B cell (primary cell): ENCODE measurements at regions of chr11 and their contacts with region 1.

Region 1: GRCh38 chr11:1852877-1853276 is at the start of gene LSP1:
- DNase-seq: peak; percentile 95
- ATAC-seq: peak; percentile 60
- H3K4me3 ChIP-seq: peak within 1 kb of the TSS; percentile 57 to 97 (median 95)
- H3K4me3 Mint-ChIP-seq: peak within 1 kb of the TSS; percentile 100
- H3K27ac ChIP-seq: peak within 1 kb of the TSS; percentile 94 to 99
- H3K27ac Mint-ChIP-seq: peak within 1 kb of the TSS; percentile 91
- H3K4me1 ChIP-seq: peaks cover 74 to 90% of the 10 kb centered on the region in 2 donors
- H3K4me1 Mint-ChIP-seq: peaks cover 72% of the 10 kb centered on the region
- H3K27me3 ChIP-seq: no peaks in the 10 kb centered on the region
- H3K27me3 Mint-ChIP-seq: no peaks in the 10 kb centered on the region
- CTCF ChIP-seq: no peak
- total RNA-seq, gene LSP1: 445 and 446 TPM in 2 replicates

Region 2: DNA sequence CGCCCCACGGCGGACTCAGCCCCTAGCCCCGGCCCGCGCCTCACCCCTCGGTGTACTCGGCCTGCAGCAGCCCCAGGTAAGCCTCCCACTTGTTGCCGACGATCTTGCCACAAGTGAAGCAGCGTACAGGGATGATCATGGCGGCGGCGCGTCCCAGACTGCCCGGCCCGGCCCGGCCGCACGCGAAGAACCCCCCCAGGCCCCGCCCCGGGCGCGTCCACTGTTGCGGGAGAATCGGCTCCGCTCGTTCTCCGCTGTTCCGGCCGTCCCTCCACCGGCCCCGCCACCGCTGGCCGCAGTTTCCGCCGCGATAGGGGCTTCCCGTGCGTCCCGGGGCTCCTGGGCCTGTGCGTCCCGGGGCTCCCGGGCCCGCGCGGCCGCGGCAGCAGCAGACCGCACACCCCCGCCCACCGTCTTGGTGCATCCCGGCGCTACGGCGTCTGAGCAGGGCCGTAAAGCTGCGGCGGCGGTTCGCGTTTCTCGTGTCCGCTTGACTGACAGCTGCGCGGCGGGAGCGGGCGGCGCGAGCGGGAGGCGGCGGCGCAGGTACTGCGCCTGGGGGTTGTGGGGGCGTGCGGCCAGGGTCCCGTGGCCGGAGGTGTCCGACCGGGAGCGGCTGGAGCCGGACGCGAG is 1010.4 kb before region 1 on chr11 and contains the starts of genes POLR2L and TSPAN4:
- CTCF ChIA-PET with region 1: no interaction called
- POLR2A ChIA-PET with region 1: no interaction called
- intact Hi-C with region 1: loop called (anchors 5 kb)
- DNase-seq: peak; percentile 97
- ATAC-seq: peak; percentile 84
- H3K4me3 ChIP-seq: peak within 1 kb of the TSS; percentile 69 to 96 (median 76)
- H3K4me3 Mint-ChIP-seq: peak within 1 kb of the TSS; percentile 88
- H3K27ac ChIP-seq: peak within 1 kb of the TSS in 1 of 2 donors; percentile 93
- H3K27ac Mint-ChIP-seq: peak within 1 kb of the TSS; percentile 91
- H3K4me1 ChIP-seq: peaks cover 26 to 37% of the 10 kb centered on the region in 2 donors
- H3K4me1 Mint-ChIP-seq: peaks cover 27% of the 10 kb centered on the region
- H3K27me3 ChIP-seq: peaks cover 0 to 30% (median 6%) of the 10 kb centered on the region in 4 experiments
- H3K27me3 Mint-ChIP-seq: no peaks in the 10 kb centered on the region
- CTCF ChIP-seq: no peak
- total RNA-seq, gene POLR2L: 39.0 and 44.4 TPM in 2 replicates
- total RNA-seq, gene TSPAN4: 2.2 and 2.9 TPM in 2 replicates

Region 3: GRCh38 chr11:1832211-1832919 is 20.5 kb before region 1 on chr11:
- CTCF ChIA-PET with region 1: interaction called, 17 read pairs
- POLR2A ChIA-PET with region 1: no interaction called
- intact Hi-C with region 1: no loop called
- DNase-seq: peak; percentile 76
- ATAC-seq: peak; percentile 77
- H3K4me3 ChIP-seq: no peak overlapping the region
- H3K4me3 Mint-ChIP-seq: no peak overlapping the region
- H3K27ac ChIP-seq: no peak overlapping the region
- H3K27ac Mint-ChIP-seq: no peak overlapping the region
- H3K4me1 ChIP-seq: peaks cover 4 to 9% of the 10 kb centered on the region in 2 donors
- H3K4me1 Mint-ChIP-seq: peaks cover 3% of the 10 kb centered on the region
- H3K27me3 ChIP-seq: peaks cover 0 to 28% (median 5%) of the 10 kb centered on the region in 4 experiments
- H3K27me3 Mint-ChIP-seq: peaks cover 8% of the 10 kb centered on the region
- CTCF ChIP-seq: peak; percentile 99

Region 4: DNA sequence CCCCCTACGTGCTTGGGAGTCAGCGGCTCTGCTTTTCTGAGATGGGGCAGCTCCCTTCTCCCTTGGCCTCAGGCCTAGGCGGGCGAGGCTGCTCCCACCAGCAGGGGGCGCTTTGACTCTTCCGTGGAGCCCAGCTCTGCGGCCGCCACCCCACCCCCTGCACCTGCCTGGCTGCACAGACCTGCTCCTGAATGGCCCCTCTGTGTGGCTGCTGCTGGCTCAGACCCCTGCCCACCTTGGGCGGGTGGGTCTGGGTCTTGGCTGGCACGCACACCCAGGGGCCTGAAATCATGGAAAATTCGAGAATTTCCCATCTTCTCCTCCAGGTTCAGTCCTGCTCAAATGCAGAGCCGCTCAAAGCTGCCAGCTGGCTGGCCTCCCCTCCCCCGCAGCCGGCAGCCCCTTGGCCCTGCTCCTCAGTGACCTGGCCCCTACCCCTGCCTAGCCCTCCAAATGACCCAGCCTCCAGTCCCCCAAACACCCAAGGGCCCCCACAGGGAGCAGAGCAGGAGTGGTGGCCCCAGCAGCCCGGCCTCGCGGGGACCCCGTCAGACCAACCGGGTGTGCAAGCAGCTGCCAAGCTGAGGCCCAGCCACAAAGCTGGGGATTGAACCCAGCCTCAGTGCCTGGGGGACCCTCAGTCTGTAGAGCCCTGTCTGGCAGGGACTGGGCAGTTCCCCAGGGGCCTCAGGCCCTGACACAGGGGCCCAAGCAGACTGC is 29.8 kb after region 1 on chr11:
- CTCF ChIA-PET with region 1: interaction called, 104 read pairs
- POLR2A ChIA-PET with region 1: interaction called, 7 read pairs
- intact Hi-C with region 1: loop called (anchors 2 kb)
- DNase-seq: peak; percentile 86
- ATAC-seq: peak; percentile 74
- H3K4me3 ChIP-seq: no peak overlapping the region
- H3K4me3 Mint-ChIP-seq: peak overlapping the region; percentile 34
- H3K27ac ChIP-seq: no peak overlapping the region
- H3K27ac Mint-ChIP-seq: peak overlapping the region; percentile 75
- H3K4me1 ChIP-seq: peaks cover 32 to 46% of the 10 kb centered on the region in 2 donors
- H3K4me1 Mint-ChIP-seq: peaks cover 38% of the 10 kb centered on the region
- H3K27me3 ChIP-seq: no peaks in the 10 kb centered on the region
- H3K27me3 Mint-ChIP-seq: no peaks in the 10 kb centered on the region
- CTCF ChIP-seq: peak; percentile 87

Region 5: GRCh38 chr11:1946812-1947484 is 94.1 kb after region 1 on chr11 and contains the start of gene MRPL23:
- CTCF ChIA-PET with region 1: interaction called, 11 read pairs
- POLR2A ChIA-PET with region 1: interaction called, 5 read pairs
- intact Hi-C with region 1: no loop called
- DNase-seq: no peak
- ATAC-seq: peak; percentile 93
- H3K4me3 ChIP-seq: no peak within 1 kb of the TSS
- H3K4me3 Mint-ChIP-seq: no peak within 1 kb of the TSS
- H3K27ac ChIP-seq: no peak within 1 kb of the TSS
- H3K27ac Mint-ChIP-seq: no peak within 1 kb of the TSS
- H3K4me1 ChIP-seq: no peaks in the 10 kb centered on the region
- H3K4me1 Mint-ChIP-seq: no peaks in the 10 kb centered on the region
- H3K27me3 ChIP-seq: no peaks in the 10 kb centered on the region
- H3K27me3 Mint-ChIP-seq: no peaks in the 10 kb centered on the region
- CTCF ChIP-seq: no peak
- total RNA-seq, gene MRPL23: 44.7 and 47.8 TPM in 2 replicates

Region 6: GRCh38 chr11:2151500-2152257 is 298.8 kb after region 1 on chr11:
- CTCF ChIA-PET with region 1: interaction called, 15 read pairs
- POLR2A ChIA-PET with region 1: interaction called, 3 read pairs
- intact Hi-C with region 1: no loop called
- DNase-seq: peak; percentile 88
- ATAC-seq: peak; percentile 84
- H3K4me3 ChIP-seq: peak overlapping the region in 2 of 5 experiments; percentile 9 to 14
- H3K4me3 Mint-ChIP-seq: peak overlapping the region; percentile 52
- H3K27ac ChIP-seq: no peak overlapping the region
- H3K27ac Mint-ChIP-seq: peak overlapping the region; percentile 46
- H3K4me1 ChIP-seq: peaks cover 5 to 9% of the 10 kb centered on the region in 2 donors
- H3K4me1 Mint-ChIP-seq: peaks cover 10% of the 10 kb centered on the region
- H3K27me3 ChIP-seq: peaks cover 0 to 34% (median 17%) of the 10 kb centered on the region in 4 experiments
- H3K27me3 Mint-ChIP-seq: peaks cover 35% of the 10 kb centered on the region
- CTCF ChIP-seq: peak; percentile 77

Region 7: GRCh38 chr11:2390725-2391151 is 537.9 kb after region 1 on chr11:
- CTCF ChIA-PET with region 1: no interaction called
- POLR2A ChIA-PET with region 1: no interaction called
- intact Hi-C with region 1: loop called (anchors 5 kb)
- DNase-seq: no peak
- ATAC-seq: no peak
- H3K4me3 ChIP-seq: no peak overlapping the region
- H3K4me3 Mint-ChIP-seq: peak overlapping the region; percentile 55
- H3K27ac ChIP-seq: no peak overlapping the region
- H3K27ac Mint-ChIP-seq: peak overlapping the region; percentile 66
- H3K4me1 ChIP-seq: peaks cover 100% of the 10 kb centered on the region in 2 donors
- H3K4me1 Mint-ChIP-seq: peaks cover 83% of the 10 kb centered on the region
- H3K27me3 ChIP-seq: no peaks in the 10 kb centered on the region
- H3K27me3 Mint-ChIP-seq: no peaks in the 10 kb centered on the region
- CTCF ChIP-seq: no peak